Dendritic cell treated with granulocyte-macrophage colony-stimulating factor and Interleukin-4, amounts not matched to agents 40 ng/mL and 50 ng/mL, for 4 days (primary cell): ENCODE measurements at regions of chr18 and their contacts with region 1.

Region 1: GRCh38 chr18:26656944-26657536 is 108.7 kb upstream of the KCTD1 start:
- H3K4me3 Mint-ChIP-seq: peak overlapping the region; percentile 80
- H3K27ac Mint-ChIP-seq: no peak overlapping the region
- H3K4me1 Mint-ChIP-seq: peaks cover 24% of the 10 kb centered on the region
- H3K27me3 Mint-ChIP-seq: peaks cover 54% of the 10 kb centered on the region

Region 2: DNA sequence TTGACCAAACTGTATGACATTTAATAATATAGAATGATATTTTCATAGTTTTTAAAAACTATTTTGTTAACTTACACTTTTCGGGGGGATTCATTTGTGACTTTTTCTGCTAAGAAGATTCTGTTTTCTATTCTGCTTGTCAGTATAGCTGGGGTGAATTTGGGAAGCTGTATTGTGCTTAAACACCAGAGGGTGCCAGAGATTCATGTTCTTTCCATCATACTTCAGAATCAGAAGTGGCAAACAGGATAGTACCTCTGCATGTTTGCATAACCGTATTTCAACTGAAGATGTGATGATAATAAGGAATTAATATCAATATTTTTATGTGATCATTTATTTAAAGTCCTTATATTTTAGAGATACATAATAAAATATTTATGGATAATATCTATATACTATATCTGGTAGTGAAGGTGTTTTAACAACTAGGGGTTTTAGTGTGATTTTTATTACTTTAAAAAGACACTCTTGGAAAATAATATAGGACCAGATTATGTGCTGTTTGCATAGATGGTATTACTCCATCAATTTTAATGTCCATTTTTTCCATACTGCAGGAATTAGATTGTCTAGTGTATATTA is 349.8 kb before region 1 on chr18:
- intact Hi-C with region 1: loop called (anchors 5 kb)
- H3K4me3 Mint-ChIP-seq: no peak overlapping the region
- H3K27ac Mint-ChIP-seq: no peak overlapping the region
- H3K4me1 Mint-ChIP-seq: no peaks in the 10 kb centered on the region
- H3K27me3 Mint-ChIP-seq: no peaks in the 10 kb centered on the region